SK-N-SH (cell line): ENCODE measurements at regions of chr12 and their contacts with region 1.

Region 1: DNA sequence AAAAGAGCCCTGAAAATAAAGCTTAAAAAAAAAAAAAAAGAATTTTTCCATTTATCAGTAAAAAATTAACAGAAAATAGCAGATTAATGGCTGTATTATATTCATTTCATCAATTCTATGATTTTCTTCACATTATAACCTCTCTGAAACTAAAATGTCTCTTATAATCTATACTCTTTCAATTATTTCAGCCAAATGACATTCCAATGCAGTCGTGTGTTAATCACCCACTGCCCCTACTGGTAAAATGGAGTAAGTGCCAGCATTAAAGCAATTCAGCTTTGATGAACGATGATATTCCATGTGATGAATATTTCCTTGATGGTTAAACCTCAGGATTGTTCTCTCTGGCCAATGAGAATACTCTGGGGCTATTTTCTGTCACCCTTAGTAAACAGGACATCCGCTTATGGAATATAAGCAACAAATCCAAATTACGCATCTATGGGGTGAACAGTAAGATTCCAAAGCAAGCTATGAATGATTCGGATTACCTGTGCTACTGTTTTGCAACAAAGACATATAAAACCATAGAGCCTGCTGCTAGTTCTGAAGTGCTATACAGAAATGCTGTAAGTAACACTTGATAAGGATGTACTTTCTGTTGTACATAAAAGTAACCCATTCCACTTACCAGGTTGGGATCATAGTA is 20.3 kb upstream of the SYCP3 start:
- DNase-seq: peak; percentile 59
- H3K4me3 ChIP-seq: no peak overlapping the region; a peak in 1 of 4 replicates
- H3K27ac ChIP-seq: no peak overlapping the region
- H3K4me1 ChIP-seq: no peaks in the 10 kb centered on the region
- H3K27me3 ChIP-seq: no peaks in the 10 kb centered on the region
- CTCF ChIP-seq: peak; percentile 88
- EP300 ChIP-seq: no peak
- RAD21 ChIP-seq: peak; percentile 77

Region 2: DNA sequence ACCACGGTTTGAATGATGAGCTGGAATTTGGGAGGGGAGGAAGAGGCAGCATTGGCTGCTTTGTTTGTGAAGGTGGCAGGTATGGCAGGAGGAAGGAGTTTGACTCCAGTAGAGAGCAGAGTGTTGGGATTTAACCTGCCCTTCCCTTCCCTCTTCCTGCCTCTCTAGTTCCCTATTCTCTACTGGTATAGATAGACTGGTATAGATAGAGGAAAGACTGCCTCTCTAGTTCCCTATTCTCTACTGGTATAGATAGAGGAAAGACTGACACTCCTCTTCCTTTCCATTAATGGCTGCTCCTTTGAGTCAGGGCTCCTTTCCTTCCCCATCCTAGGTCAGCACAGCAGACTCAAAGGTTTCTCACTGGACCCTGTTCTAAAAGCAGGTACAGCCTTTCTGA is 11.8 kb before region 1 on chr12:
- CTCF ChIA-PET with region 1: interaction called, 18 read pairs
- POLR2A ChIA-PET with region 1: no interaction called
- DNase-seq: no peak
- H3K4me3 ChIP-seq: no peak overlapping the region
- H3K27ac ChIP-seq: no peak overlapping the region
- H3K4me1 ChIP-seq: peaks cover 0 to 4% of the 10 kb centered on the region in 2 experiments; a peak in 2 of 4 replicates
- H3K27me3 ChIP-seq: no peaks in the 10 kb centered on the region
- CTCF ChIP-seq: no peak
- EP300 ChIP-seq: no peak
- RAD21 ChIP-seq: no peak

Region 3: DNA sequence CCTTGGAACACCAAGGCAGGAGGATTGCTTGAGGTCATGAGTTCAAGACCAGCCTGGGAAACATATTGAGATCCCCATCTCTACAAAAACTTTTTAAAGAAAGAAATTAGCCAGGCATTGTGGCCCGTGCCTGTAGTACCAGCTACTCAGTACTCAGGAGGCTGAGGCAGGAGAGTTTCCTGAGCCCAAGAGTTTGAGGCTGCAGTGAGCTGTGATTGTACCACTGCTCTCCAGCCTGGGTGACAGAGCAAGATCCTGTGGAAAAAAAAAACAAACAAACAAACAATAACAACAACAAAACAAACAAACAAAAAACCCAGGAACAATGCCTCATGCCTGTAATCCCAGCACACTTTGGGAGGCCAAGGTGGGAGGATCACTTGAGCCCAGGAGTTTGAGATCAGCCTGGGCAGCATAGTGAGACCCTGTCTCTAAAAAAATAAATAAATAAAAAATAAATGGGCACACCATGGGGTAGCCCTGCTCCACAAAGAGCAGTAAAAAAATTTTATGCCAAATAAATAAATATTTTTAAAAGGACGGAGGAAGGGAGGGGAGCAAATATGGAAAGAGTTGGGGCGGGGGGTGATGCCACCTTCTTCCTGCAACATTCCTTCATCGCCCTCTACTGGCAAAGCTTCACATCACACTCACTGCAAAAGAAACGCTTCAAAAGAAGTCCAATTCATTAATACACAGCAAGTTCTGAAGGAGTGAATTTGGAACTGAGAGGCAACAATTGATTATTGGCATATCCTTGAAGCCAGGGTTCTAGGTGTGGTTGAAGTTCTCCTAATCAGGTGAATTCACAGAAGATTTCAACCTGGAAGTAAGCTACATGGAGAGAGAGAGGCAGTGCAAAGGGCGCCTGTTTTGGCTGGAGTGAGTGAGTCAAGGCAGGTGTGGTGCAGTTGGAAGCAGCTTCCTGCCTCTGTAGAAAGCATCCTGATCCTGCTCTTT is 80.1 kb after region 1 on chr12:
- CTCF ChIA-PET with region 1: interaction called, 10 read pairs
- POLR2A ChIA-PET with region 1: no interaction called
- DNase-seq: peak; percentile 62
- H3K4me3 ChIP-seq: no peak overlapping the region
- H3K27ac ChIP-seq: no peak overlapping the region
- H3K4me1 ChIP-seq: no peaks in the 10 kb centered on the region
- H3K27me3 ChIP-seq: no peaks in the 10 kb centered on the region
- CTCF ChIP-seq: peak; percentile 90
- EP300 ChIP-seq: no peak
- RAD21 ChIP-seq: peak; percentile 79